Mammary epithelial cell (primary cell): ENCODE measurements at regions of chr2 and their contacts with region 1.

Region 1: DNA sequence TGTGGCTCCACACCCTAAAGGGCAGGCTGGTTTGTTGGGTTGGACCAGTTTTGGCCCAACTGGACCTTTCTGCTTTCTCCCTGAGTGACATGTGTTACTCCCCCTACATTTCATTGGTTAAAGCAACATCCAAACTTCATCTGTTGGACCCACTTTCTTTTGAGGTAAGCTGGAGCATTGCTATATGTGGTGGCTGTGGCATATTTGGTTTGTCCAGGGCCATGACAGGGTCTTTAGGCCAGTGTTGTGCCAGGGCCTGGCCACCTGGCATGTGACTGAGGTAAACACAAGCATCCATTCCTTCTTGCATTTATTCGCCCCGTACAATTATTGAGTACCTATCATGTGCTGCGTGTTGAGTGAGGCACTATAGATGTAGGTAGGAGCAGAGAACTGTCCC is 36.8 kb upstream of the MARCO start:
- DNase-seq: no peak
- H3K4me3 ChIP-seq: no peak overlapping the region
- H3K27ac ChIP-seq: no peak overlapping the region
- H3K4me1 ChIP-seq: no peaks in the 10 kb centered on the region
- H3K27me3 ChIP-seq: peaks cover 3% of the 10 kb centered on the region
- CTCF ChIP-seq: no peak

Region 2: DNA sequence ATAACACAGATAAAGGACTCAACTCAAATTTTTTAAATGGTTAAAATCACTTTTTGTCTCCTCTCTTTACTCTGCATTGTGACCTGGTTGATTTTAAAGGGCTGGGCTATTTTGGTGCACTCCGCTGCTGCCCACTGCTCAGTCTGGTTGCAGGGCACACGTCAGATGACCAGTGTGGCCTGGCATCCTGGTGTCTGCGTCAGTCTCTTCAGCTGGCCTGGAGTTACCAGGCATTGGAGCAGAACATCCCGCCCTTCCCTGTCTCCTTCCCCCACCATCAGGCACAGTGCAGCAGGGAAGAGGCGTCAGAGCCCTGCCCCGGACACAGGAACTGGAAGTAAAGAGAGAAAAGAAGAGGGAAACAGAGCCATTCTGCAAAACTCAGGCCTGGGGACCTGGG is 244.4 kb after region 1 on chr2:
- CTCF ChIA-PET with region 1: no interaction called
- dilution Hi-C with region 1: loop called (anchors 5 kb)
- in situ Hi-C with region 1: no loop called
- intact Hi-C with region 1: no loop called
- DNase-seq: no peak
- H3K4me3 ChIP-seq: no peak overlapping the region
- H3K27ac ChIP-seq: no peak overlapping the region
- H3K4me1 ChIP-seq: no peaks in the 10 kb centered on the region
- H3K27me3 ChIP-seq: peaks cover 2% of the 10 kb centered on the region
- CTCF ChIP-seq: no peak

Region 3: GRCh38 chr2:119598596-119599263 is 693.5 kb after region 1 on chr2:
- CTCF ChIA-PET with region 1: no interaction called
- dilution Hi-C with region 1: no loop called
- in situ Hi-C with region 1: no loop called
- intact Hi-C with region 1: no loop called
- DNase-seq: no peak
- H3K4me3 ChIP-seq: no peak overlapping the region
- H3K27ac ChIP-seq: no peak overlapping the region
- H3K4me1 ChIP-seq: no peaks in the 10 kb centered on the region
- H3K27me3 ChIP-seq: no peaks in the 10 kb centered on the region
- CTCF ChIP-seq: no peak